ENCODE measurements at regions of chr7 and their contacts with region 1.

Region 1: GRCh38 chr7:117741962-117742361 is 131.3 kb downstream of the CTTNBP2 start:
- DNase-seq: no peak
- ATAC-seq: no peak

Region 2: DNA sequence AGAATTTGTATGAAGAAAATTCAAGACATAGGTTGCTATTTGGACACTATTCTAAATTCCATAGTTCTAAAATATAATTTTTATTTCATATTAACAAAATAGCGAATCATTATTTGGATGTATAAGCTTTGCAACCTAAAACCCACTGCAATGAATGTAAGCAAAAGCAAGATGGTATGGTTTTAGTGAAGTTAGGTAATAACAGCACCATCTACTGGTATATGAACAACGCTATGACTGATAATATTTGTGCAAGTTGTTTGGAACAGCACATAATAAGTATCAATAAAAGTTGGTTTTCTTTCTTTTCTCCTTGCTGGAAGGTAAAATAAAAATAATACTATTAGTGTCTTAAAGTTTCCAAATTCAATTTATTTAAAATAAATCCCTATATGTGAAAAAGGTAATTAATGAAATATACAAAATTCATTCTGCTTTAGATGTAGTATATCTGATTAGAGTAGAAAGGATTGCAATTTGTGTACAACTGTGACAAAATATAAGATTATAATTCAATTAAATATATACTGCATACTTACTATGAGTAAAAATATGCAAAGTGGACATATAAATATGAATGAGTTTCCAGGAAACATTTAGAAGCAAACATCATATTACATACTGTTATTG is 363.0 kb after region 1 on chr7:
- intact Hi-C with region 1: loop called in 1 of 2 experiments (anchors 10 kb)
- DNase-seq: no peak
- ATAC-seq: peak; percentile 52